Head of caudate nucleus (tissue), 42 donors: ENCODE measurements at regions of chr19 and their contacts with region 1.

Region 1: DNA sequence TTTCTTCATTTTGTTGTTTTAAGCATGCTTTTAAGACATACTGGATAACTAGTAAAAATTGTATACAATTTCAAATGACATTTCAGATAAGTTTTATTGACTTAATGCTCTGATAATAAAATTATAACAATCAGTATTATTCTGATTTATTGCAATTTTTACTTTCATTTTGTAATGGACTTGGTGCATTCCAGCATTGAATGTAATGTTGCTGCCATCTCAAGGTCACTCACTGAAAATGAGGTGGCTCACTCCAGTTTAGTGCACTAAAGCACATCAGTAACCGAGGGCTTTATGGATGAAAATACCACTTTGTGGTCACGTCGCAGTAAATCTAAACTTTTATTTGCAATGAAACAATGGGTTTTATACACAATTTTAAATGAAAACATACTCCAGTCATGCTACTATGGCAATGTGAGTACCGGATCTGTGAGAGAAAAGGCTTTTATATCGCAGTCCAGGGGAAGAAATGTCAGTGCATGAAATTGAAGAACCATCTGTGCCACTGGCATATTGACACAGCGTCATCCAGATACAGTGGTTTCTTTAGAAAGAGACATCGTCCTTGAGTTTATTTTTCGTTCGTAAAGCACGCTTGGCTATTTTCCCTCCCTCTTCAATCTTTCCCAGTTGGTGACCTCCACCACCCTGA is 20.7 kb upstream of the ZNF507 start:
- DNase-seq: peak in 8 of 42 donors; percentile 18 to 58 (median 38)

Region 2: DNA sequence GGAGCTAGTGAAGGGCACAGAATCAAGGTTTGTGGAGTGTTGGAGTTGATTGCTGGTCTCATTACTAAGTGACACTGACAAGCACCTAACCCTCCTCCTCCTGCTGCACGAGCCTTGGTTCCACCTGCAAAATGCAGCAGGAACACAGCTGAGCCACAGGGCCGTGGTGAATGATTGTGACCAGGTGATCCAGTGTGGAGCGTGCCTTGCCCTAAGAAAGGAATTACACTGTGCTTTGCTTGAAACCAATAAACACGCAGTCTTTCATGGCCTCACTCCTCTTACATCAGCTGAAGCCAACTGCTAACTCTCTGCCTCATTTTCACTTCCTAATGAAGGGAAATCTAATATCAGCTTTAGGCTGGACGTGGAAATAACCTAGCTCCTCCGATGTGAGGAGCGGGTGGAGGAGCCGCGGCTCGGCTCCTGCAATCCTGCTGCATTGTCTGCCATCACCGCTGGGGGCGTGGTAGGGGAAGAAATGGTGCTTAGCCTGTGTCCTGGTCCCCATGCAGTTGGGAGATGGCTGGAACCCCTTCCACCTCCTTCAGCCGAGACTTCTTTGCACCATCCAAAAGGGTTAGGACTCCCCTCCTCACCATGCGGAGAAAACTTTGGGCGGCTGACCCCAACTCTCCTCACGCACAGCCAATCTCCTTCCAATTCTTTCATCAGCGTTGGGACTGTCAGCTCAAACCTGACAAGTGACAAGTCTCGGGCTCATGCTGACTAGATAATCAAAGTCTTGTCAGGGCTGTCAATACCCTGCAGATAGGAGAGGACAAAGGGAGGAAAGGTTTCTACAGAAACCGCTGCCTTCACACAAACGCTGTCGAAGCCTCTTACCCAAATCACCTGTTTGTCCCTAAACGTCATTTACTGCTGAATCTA is 1524.6 kb before region 1 on chr19:
- intact Hi-C with region 1: loop called (anchors 10 kb)
- DNase-seq: peak; percentile 40 to 85 (median 69)